ENCODE measurements at regions of chr5 and their contacts with region 1.

Region 1: DNA sequence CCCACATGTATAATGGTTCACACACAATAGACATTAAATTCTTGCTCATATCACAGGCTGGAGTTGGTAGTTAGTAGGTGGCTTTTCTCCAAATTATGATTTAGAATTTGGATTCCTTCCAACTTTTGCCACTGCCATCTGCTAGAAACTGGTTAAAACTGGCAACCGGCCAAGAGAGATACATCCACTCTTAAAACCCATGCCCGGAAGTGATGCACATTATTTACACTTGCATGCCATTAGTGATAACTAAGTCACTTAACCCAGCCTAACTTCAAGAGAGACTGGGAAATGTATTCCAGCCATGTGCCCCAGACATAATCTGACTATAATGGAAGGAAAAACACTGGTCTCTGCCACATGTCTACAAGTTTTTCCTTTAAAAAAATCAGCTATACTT is 395.7 kb upstream of the SEMA6A start:
- DNase-seq: no peak
- H3K4me3 ChIP-seq: no peak overlapping the region
- H3K27ac ChIP-seq: no peak overlapping the region
- H3K4me1 ChIP-seq: no peaks in the 10 kb centered on the region
- H3K27me3 ChIP-seq: no peaks in the 10 kb centered on the region
- CTCF ChIP-seq: no peak

Region 2: DNA sequence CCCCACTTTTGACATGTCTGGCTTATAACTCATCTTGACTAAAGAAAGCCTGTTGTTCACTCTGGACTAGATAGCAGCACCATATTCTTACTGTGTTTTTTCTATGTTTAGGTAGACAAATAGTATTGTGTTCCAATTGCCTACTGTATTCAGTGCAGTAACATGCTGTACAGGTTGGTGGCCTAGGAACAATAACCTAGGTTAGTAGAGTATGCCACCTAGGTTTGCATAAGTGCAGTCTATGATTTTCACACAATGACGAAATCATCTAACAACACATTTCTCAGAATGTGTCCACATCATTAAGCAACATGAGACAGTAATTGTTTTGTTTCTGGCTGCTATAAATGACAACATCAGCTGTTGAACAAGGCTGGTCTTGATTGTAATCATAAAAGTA is 49.3 kb after region 1 on chr5:
- CTCF ChIA-PET with region 1: no interaction called
- dilution Hi-C with region 1: loop called (anchors 5 kb)
- in situ Hi-C with region 1: no loop called
- intact Hi-C with region 1: no loop called
- DNase-seq: no peak
- H3K4me3 ChIP-seq: no peak overlapping the region
- H3K27ac ChIP-seq: no peak overlapping the region
- H3K4me1 ChIP-seq: no peaks in the 10 kb centered on the region
- H3K27me3 ChIP-seq: no peaks in the 10 kb centered on the region
- CTCF ChIP-seq: no peak

Measured in mammary epithelial cell (primary cell).